ENCODE measurements at regions of chr4 and their contacts with region 1.

Region 1: DNA sequence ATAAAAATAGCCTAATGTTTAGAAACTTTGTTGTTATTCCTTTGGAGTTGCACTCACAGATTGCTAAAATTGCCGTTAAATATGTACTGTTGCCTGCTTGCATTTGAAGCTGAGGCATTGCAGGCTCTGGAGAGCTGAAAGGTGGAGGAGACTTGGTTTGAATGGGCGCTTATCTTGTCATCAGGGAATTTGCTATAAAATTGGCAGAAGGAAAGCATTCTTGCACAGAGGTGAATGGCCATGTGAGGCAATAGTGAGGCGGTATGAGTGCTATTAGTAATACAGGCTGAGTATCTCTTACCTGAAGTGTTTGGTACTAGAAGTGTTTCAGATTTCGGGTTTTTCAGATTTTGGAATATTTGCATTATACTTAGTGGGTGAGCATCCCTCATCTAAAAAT is 41.3 kb downstream of the TRAPPC11 start:
- DNase-seq: no peak
- ATAC-seq: no peak
- H3K4me3 ChIP-seq: no peak overlapping the region
- H3K4me3 Mint-ChIP-seq: no peak overlapping the region
- H3K27ac ChIP-seq: no peak overlapping the region
- H3K27ac Mint-ChIP-seq: no peak overlapping the region
- H3K4me1 ChIP-seq: no peaks in the 10 kb centered on the region
- H3K4me1 Mint-ChIP-seq: no peaks in the 10 kb centered on the region
- H3K27me3 ChIP-seq: no peaks in the 10 kb centered on the region
- H3K27me3 Mint-ChIP-seq: no peaks in the 10 kb centered on the region
- CTCF ChIP-seq: no peak

Region 2: DNA sequence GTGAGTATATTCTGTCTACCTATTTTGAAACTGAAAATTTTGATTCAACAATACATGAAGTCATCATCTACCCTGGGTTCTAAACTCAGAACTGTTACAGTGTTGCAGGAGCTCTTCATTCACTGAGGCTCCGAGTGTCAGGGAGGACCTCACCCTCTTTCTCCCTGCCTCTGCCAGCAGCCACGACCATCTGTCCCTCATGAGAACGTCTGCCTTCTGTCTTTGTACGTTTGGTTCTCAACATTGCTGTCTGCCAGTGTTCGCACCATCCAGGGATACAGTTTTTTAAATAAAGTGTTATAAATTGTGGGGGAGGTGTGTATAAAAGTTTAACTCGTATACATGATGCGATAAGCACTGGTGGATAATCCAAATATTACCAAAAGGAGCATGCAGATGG is 14.2 kb after region 1 on chr4:
- CTCF ChIA-PET with region 1: interaction called, 10 read pairs
- POLR2A ChIA-PET with region 1: no interaction called
- intact Hi-C with region 1: no loop called
- DNase-seq: no peak
- ATAC-seq: no peak
- H3K4me3 ChIP-seq: no peak overlapping the region
- H3K4me3 Mint-ChIP-seq: no peak overlapping the region
- H3K27ac ChIP-seq: no peak overlapping the region
- H3K27ac Mint-ChIP-seq: no peak overlapping the region
- H3K4me1 ChIP-seq: no peaks in the 10 kb centered on the region
- H3K4me1 Mint-ChIP-seq: no peaks in the 10 kb centered on the region
- H3K27me3 ChIP-seq: no peaks in the 10 kb centered on the region
- H3K27me3 Mint-ChIP-seq: no peaks in the 10 kb centered on the region
- CTCF ChIP-seq: no peak

Region 3: DNA sequence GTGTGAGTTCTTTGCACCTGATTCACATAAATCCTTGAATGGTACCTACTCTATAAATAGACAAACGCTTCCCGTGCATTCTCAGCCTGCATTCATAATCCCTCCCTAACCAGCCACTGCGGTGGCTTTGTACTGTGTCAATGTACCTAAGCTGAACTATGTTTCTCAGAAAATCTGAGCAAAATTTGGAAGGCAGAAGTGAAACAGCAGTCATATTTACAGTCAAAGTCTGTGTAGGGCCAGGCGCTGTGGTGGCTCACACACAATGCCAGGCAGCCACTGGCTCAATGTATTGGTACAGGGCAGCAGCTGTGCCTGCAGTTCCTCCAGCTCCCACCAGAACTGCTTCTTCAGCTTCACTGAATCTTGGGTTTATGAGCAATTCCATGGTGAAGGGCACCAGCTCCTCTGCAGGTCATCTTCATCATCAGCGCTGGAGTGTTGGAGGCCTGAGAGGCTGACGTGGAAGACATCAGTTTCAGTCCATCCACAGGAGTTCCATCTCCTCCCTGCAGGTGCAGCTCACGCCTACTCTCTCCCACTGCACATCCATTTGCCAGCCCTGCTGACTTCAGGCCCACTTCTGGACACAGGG is 806.2 kb after region 1 on chr4:
- CTCF ChIA-PET with region 1: no interaction called
- POLR2A ChIA-PET with region 1: no interaction called
- intact Hi-C with region 1: no loop called
- DNase-seq: peak in 4 of 9 experiments; percentile 14 to 48 (median 24)
- ATAC-seq: peak; percentile 72
- H3K4me3 ChIP-seq: no peak overlapping the region
- H3K4me3 Mint-ChIP-seq: no peak overlapping the region
- H3K27ac ChIP-seq: no peak overlapping the region
- H3K27ac Mint-ChIP-seq: no peak overlapping the region
- H3K4me1 ChIP-seq: peaks cover 22% of the 10 kb centered on the region
- H3K4me1 Mint-ChIP-seq: peaks cover 22% of the 10 kb centered on the region
- H3K27me3 ChIP-seq: no peaks in the 10 kb centered on the region
- H3K27me3 Mint-ChIP-seq: no peaks in the 10 kb centered on the region
- CTCF ChIP-seq: peak; percentile 18